Right ventricle myocardium inferior (tissue), 1 donor: ENCODE measurements at regions of chr1 and their contacts with region 1.

Region 1: GRCh38 chr1:64242895-64243756 is 39.7 kb downstream of the UBE2U start:
- DNase-seq: no peak
- ATAC-seq: no peak

Region 2: DNA sequence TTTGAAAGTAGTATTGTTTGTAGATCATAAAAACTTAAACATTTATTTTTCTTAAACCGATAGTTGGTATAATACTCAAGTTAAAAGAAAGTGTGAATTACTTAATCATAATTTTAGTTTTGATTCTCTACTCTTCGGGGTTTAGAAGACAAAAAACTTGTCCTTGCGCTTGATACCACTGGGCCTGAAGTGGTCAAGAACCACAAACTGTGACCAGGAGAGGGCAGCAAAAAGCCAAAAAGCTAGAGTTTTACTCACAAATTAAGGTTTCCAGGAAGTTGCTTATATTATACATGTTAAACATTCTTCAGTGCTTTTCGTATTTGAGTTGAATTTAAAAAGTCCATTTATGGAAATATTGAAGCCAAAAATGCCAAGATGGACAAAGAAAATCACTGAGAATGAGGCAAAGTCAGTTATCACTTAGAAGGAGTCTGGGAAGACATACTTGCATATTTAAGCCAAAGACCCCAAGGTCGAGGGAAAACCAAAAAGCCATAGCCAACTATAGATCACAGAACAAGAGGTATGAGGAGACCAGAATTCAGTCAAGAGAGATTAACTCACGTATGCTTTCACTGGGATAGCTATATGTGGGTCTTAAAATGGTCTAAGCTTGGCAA is 685.6 kb before region 1 on chr1:
- intact Hi-C with region 1: loop called (anchors 2 kb)
- DNase-seq: no peak
- ATAC-seq: no peak

Region 3: GRCh38 chr1:63575340-63575826 is 667.7 kb before region 1 on chr1:
- intact Hi-C with region 1: loop called (anchors 5 kb)
- DNase-seq: no peak
- ATAC-seq: no peak

Region 4: DNA sequence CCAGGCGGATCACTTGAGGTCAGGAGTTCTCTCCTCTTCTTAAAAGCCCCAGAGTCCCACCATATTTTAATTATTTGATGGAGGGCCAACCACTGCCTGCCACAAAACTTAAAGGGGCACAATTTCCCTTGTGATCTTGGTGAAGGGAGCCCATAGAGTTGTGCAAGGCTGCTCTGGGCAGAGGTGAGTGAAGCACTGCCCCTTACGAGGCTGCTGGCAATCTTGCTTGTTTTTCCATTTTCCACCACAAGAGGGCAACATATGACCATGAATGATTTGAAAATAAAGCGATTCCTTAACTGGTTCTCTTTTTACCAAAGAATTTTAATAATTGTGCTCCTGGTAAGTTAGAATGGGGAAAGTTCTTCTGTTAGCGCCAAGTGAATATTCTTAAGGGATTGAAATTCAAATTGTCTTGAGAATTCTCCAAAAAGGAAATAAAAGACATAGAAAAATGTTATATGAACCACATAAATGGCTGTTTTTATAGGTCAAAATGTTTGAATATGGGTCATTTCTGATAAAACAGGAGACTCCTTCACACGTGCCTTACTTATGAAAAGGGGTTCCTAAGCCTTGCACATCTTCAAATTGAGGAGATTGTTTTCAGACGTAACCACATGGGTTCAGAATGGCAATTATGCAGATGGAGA is 627.2 kb before region 1 on chr1:
- intact Hi-C with region 1: loop called (anchors 2 kb)
- DNase-seq: no peak
- ATAC-seq: peak; percentile 62

Region 5: GRCh38 chr1:63674238-63674864 is 568.8 kb before region 1 on chr1:
- intact Hi-C with region 1: loop called (anchors 2 kb)
- DNase-seq: peak; percentile 79
- ATAC-seq: peak; percentile 91

Region 6: GRCh38 chr1:63691701-63692425 is 551.3 kb before region 1 on chr1:
- intact Hi-C with region 1: loop called (anchors 1 kb)
- DNase-seq: no peak
- ATAC-seq: peak; percentile 91

Region 7: DNA sequence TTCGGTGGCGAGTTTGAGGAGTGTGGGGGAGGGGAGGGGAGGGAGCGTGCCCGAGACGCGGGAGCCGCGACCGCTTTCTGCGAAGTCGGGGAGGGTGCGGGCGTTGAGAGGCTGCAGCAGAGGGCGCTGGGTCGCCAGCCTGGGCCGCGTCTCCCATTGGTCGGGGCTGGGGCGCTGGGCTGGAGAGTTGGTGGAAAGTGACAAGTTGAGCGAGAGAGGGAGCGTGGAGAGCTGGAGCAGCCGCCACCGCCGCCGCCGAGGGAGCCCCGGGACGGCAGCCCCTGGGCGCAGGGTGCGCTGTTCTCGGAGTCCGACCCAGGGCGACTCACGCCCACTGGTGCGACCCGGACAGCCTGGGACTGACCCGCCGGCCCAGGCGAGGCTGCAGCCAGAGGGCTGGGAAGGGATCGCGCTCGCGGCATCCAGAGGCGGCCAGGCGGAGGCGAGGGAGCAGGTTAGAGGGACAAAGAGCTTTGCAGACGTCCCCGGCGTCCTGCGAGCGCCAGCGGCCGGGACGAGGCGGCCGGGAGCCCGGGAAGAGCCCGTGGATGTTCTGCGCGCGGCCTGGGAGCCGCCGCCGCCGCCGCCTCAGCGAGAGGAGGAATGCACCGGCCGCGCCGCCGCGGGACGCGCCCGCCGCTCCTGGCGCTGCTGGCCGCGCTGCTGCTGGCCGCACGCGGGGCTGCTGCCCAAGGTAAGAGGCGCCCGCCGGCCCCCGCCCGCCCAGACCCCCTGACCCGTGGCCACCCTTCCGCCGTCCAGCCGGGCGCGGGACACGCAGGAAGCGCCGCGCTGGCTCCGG is 469.1 kb before region 1 on chr1 and contains the start of gene ROR1:
- intact Hi-C with region 1: loop called (anchors 10 kb)
- DNase-seq: peak; percentile 91
- ATAC-seq: peak; percentile 97
- total RNA-seq, gene ROR1: 8.4 TPM